Activated T-helper 1 cell treated with anti-CD3 and anti-CD28 coated beads, Interleukin-12 subunit alpha, Interleukin-12 subunit beta, Interleukin-2, Interleukin-4 antibody, amounts not matched to agents 30 ng/mL and 10 ng/mL and 1 ng/mL, durations not matched to agents 14 hours and 24 hours and 36 hours (primary cell): ENCODE measurements at regions of chr1 and their contacts with region 1.

Region 1: DNA sequence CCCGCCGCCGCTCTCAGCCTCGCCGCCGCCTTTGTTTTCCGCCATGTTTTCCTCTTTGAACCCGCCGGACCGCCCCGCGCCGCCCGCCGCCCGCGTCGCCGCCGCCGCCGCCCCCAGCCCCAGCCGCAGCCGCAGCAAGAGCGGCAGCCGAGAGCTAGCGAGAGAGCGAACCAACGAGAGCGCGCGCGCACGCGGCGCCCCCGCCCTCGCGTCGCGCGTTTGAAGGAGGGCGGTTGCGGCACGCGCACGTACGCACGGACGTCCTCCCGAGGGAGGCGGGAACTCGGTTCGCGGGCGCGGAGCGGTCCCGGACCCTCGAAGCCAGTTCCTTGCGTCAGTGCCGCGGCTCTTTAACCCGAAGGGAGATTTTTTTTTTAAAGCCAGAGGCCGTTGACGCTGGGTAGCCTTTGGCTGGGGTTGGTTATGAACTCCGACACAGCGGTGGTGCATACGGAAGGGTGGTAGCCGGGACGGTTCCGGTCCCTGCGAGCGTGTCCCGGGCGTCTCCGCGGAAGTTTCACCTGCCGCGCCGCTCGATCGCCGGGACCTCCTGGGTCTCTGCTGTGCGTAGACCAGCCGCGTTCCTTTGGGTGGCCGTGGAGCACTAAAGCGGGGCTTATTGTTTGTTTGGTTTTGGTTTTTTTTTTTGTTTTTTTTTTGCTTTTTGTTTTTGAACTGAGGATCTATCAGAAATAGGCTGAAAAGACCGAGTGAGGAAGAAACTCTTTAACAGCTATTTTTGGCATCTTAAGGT is at the start of gene TRIM33:
- DNase-seq: peak; percentile 92
- H3K4me3 Mint-ChIP-seq: peak within 1 kb of the TSS; percentile 93
- H3K27ac Mint-ChIP-seq: peak within 1 kb of the TSS; percentile 98
- H3K4me1 Mint-ChIP-seq: peaks cover 45% of the 10 kb centered on the region
- H3K27me3 Mint-ChIP-seq: peaks cover 1% of the 10 kb centered on the region
- total RNA-seq, gene TRIM33: 39.2 and 41.7 TPM in 2 replicates

Region 2: GRCh38 chr1:113904674-113905434 is 606.4 kb before region 1 on chr1 and contains the starts of genes AP4B1 and DCLRE1B:
- intact Hi-C with region 1: loop called (anchors 1 kb)
- DNase-seq: peak; percentile 98
- H3K4me3 Mint-ChIP-seq: peak within 1 kb of the TSS; percentile 99
- H3K27ac Mint-ChIP-seq: peak within 1 kb of the TSS; percentile 95
- H3K4me1 Mint-ChIP-seq: peaks cover 58% of the 10 kb centered on the region
- H3K27me3 Mint-ChIP-seq: no peaks in the 10 kb centered on the region
- total RNA-seq, gene AP4B1: 36.3 and 40.9 TPM in 2 replicates
- total RNA-seq, gene DCLRE1B: 20.9 and 21.2 TPM in 2 replicates

Region 3: GRCh38 chr1:114263343-114263742 is 247.9 kb before region 1 on chr1:
- intact Hi-C with region 1: no loop called
- DNase-seq: no peak
- H3K4me3 Mint-ChIP-seq: no peak overlapping the region
- H3K27ac Mint-ChIP-seq: no peak overlapping the region
- H3K4me1 Mint-ChIP-seq: no peaks in the 10 kb centered on the region
- H3K27me3 Mint-ChIP-seq: peaks cover 15% of the 10 kb centered on the region

Region 4: DNA sequence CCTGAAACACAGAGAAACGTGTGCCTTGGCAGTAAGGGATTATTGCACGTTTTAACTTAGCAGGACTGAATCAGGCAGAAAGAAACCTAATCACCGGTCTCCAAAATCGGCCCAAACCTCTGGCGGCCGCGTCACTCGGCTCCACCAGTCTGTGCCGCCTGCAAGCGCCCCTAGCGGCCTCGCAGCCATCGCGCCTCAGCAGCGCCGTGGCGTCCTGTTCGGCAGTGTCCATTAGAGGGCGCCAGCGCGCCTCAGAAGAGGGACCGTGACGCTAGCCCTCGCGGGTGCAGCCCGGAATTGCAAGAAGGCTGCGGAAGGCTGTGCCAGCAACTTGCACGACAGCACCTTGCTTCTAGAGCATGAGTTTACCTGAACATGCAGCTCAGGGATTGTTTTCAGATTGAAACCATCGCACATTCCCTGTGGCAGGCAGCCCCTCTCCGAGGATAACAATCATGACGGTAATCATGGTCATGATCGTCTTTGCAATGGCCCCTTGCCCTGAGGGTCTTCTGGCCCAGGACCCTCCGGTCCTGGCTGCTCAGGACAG is 164.7 kb before region 1 on chr1:
- intact Hi-C with region 1: loop called (anchors 1 kb)
- DNase-seq: peak; percentile 98
- H3K4me3 Mint-ChIP-seq: peak overlapping the region; percentile 93
- H3K27ac Mint-ChIP-seq: peak overlapping the region; percentile 91
- H3K4me1 Mint-ChIP-seq: peaks cover 26% of the 10 kb centered on the region
- H3K27me3 Mint-ChIP-seq: no peaks in the 10 kb centered on the region

Region 5: DNA sequence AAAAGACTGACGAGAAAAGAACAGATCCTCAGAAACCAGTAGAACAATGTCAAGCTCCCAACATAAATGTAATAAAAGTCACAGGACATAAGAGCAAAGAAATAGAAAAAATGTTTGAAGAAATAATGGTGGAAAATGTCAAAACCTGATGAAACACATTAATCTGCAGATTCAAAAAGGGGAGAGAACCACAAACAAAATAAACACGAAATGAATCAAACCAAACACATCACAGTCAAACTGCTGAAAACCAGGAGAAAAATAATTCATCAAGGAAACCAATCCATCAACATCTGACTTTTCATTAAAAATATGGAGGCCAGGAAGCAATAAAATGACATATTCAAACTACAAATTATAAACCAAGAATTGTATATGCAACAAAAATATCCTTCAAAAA is 32.1 kb before region 1 on chr1:
- intact Hi-C with region 1: no loop called
- DNase-seq: no peak
- H3K4me3 Mint-ChIP-seq: no peak overlapping the region
- H3K27ac Mint-ChIP-seq: no peak overlapping the region
- H3K4me1 Mint-ChIP-seq: peaks cover 41% of the 10 kb centered on the region
- H3K27me3 Mint-ChIP-seq: no peaks in the 10 kb centered on the region

Region 6: GRCh38 chr1:114581335-114582287 is 70.4 kb after region 1 on chr1 and contains the start of gene BCAS2:
- intact Hi-C with region 1: loop called (anchors 1 kb)
- DNase-seq: peak; percentile 94
- H3K4me3 Mint-ChIP-seq: peak within 1 kb of the TSS; percentile 91
- H3K27ac Mint-ChIP-seq: peak within 1 kb of the TSS; percentile 92
- H3K4me1 Mint-ChIP-seq: peaks cover 34% of the 10 kb centered on the region
- H3K27me3 Mint-ChIP-seq: peaks cover 5% of the 10 kb centered on the region
- total RNA-seq, gene BCAS2: 61.9 and 63.0 TPM in 2 replicates

Region 7: DNA sequence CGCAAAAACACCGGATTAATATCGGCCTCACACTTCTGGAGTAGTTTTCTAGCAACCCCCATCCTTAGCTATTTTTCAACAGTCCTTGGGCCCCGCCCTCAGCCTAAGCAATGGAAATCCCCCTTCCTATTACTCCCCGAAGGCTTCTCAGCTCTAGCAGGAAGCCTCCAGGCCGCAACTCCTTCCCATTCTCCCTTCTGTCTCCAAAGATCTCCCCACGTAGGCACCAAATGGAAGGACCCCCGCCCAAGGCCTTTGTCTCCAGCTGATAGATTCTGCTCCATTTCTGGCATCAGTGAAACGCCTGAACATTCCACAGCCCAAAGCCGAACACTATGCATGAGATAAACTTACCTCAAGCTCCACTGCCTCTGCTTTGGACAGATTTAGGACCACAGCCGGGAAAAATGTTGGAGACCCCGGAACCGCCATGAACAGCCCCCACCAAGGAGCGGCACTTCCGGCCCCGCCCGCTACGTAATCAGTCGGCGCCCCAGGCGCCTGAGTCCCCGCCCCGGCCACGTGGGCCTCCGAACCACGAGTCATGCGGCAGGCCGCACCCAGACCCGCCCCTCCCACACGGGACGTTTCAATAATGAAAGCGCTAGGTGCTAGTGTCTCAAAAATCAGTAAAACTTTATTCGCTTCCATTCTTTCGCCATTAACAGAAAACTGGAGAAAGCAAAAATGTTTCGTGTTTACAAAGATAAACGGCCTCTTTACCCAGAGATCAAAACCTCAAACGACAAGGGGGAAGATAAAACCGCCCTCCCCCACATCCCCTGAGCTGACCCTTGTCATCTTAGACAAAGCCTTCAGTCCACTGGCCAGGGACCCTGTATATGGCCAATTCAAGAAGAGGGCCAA is 205.3 kb after region 1 on chr1 and contains the start of gene NRAS:
- intact Hi-C with region 1: loop called (anchors 1 kb)
- DNase-seq: peak; percentile 93
- H3K4me3 Mint-ChIP-seq: peak within 1 kb of the TSS; percentile 99
- H3K27ac Mint-ChIP-seq: peak within 1 kb of the TSS; percentile 99
- H3K4me1 Mint-ChIP-seq: peaks cover 39% of the 10 kb centered on the region
- H3K27me3 Mint-ChIP-seq: no peaks in the 10 kb centered on the region
- total RNA-seq, gene NRAS: 57.5 and 62.1 TPM in 2 replicates

Region 8: GRCh38 chr1:115098979-115099692 is 587.9 kb after region 1 on chr1:
- intact Hi-C with region 1: loop called (anchors 2 kb)
- DNase-seq: peak; percentile 70
- H3K4me3 Mint-ChIP-seq: peak overlapping the region; percentile 89
- H3K27ac Mint-ChIP-seq: peak overlapping the region; percentile 98
- H3K4me1 Mint-ChIP-seq: peaks cover 30% of the 10 kb centered on the region
- H3K27me3 Mint-ChIP-seq: peaks cover 16% of the 10 kb centered on the region